GM13976 (cell line): ENCODE measurements at regions of chr19 and their contacts with region 1.

Region 1: DNA sequence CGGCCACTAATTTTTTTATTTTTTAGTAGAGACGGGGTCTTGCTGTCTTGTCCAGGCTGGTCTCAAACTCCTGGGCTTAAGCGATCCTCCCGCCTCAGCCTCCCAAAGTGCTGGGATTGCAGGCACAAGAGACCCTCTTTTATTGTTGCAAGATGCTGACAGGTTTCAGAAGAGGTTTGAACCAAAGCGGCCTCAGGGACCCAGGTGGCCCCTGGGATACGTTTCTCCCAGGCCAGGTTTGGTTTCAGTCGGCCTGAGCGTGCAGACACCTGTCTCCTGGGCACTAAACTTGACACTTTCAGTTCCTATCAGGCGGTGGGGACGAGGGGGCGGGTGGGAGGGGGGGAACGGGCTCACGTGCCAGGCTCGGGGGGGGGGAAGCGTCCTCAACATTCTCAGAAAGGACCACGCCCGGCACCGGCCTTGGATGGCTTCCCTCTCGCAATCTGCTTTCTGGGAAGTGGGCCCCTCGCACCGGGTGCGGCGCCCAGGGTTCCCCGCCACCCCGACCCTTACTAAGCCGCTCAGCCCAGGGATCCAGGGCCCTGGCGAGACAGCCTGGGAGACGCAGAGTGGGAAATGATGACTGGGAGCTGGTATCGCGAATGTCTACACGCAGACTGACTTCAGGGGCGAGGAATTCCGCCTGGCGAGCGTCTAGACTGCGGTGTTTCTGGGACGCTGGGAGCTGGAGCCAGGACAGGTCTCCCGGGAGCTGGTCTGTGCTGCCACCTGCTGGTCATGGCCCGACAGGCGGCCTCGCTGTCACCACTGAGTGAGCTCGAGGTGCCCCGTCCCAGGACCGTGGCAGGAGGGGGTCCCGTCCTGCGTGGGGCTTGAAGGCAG is 91.6 kb downstream of the GNG7 start:
- DNase-seq: peak; percentile 76
- CTCF ChIP-seq: peak; percentile 95

Region 2: GRCh38 chr19:2151339-2152229 is 459.3 kb before region 1 on chr19 and contains the start of gene AP3D1:
- in situ Hi-C with region 1: loop called (anchors 25 kb)
- DNase-seq: peak; percentile 100
- CTCF ChIP-seq: no peak

Region 3: GRCh38 chr19:2391118-2391725 is 219.6 kb before region 1 on chr19:
- in situ Hi-C with region 1: loop called (anchors 10 kb)
- DNase-seq: peak; percentile 74
- CTCF ChIP-seq: peak; percentile 65

Region 4: DNA sequence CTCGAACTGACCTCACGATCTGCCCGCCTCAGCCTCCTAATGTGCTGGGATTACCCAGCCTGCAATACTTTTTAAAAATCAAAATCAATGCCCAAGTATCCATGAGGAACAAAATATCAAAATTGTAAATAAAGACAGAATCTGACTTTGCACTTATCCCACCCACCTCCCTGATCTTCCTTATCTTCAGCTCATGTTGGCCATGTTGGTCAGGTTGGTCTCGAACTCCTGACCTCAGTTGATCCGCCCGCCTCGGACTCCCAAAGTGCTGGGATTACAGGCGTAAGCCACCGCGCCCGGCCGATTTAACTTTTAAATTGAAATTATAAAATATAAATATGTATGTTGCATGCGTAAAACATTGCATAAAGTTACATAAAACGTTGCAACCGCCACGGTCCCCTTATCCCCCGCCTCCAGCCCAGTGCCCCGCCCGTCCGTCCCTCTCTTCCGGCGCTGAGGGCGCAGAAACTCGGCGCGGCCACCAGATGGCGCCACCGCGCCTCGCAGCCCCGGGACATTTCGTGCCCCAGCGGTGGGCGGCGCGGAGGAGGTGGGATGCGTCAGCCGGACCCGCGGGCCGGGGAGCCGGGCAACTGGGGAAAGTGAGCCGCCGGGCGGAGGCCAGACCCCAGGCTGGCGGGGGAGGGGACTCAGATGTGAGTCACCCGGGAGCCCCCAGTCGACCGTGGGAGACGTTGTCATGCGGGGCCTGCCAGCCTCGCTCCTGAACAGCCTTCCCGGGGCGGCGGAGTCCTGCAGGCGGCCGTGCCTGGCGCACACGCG is 136.4 kb before region 1 on chr19:
- in situ Hi-C with region 1: loop called (anchors 5 kb)
- DNase-seq: peak; percentile 90
- CTCF ChIP-seq: peak; percentile 98